MCF 10A (cell line): ENCODE measurements at regions of chr14 and their contacts with region 1.

Region 1: GRCh38 chr14:90871605-90872233 is 55.5 kb upstream of the TTC7B start:
- DNase-seq: peak; percentile 84
- H3K4me3 Mint-ChIP-seq: peak overlapping the region; percentile 33
- H3K27ac Mint-ChIP-seq: peak overlapping the region; percentile 85
- H3K4me1 Mint-ChIP-seq: peaks cover 14% of the 10 kb centered on the region
- H3K27me3 Mint-ChIP-seq: no peaks in the 10 kb centered on the region
- CTCF ChIP-seq: no peak

Region 2: DNA sequence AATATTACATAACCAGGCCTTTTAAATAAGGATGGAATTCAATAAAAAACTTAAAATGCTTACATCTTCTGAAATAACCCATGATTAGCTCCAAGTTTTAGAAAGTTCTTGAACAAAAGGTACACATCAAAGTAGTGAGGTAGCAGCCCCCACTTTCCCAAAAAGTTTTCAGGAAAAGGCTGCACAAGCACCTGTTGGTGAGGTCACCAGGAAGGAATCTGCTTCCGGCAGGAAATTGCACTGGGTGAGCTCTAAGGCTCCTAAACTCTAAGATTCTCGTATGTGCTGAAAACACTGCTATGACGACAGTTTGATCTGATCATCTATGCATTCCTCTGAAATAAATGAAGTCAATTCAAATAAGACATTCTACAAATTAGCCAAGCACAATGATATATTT is 21.2 kb before region 1 on chr14:
- CTCF ChIA-PET with region 1: interaction called, 3 read pairs
- POLR2A ChIA-PET with region 1: interaction called, 11 read pairs
- intact Hi-C with region 1: no loop called
- DNase-seq: peak; percentile 58
- H3K4me3 Mint-ChIP-seq: peak overlapping the region; percentile 47
- H3K27ac Mint-ChIP-seq: peak overlapping the region; percentile 66
- H3K4me1 Mint-ChIP-seq: peaks cover 26% of the 10 kb centered on the region
- H3K27me3 Mint-ChIP-seq: no peaks in the 10 kb centered on the region
- CTCF ChIP-seq: no peak

Region 3: GRCh38 chr14:90883782-90884181 is 12.1 kb after region 1 on chr14:
- CTCF ChIA-PET with region 1: no interaction called
- POLR2A ChIA-PET with region 1: interaction called, 16 read pairs
- intact Hi-C with region 1: no loop called
- DNase-seq: peak; percentile 22
- H3K4me3 Mint-ChIP-seq: peak overlapping the region; percentile 4
- H3K27ac Mint-ChIP-seq: peak overlapping the region; percentile 99
- H3K4me1 Mint-ChIP-seq: peaks cover 10% of the 10 kb centered on the region
- H3K27me3 Mint-ChIP-seq: no peaks in the 10 kb centered on the region
- CTCF ChIP-seq: no peak